ENCODE measurements at regions of chr2 and their contacts with region 1.

Region 1: GRCh38 chr2:27170581-27171333 is 22.0 kb downstream of the TCF23 start:
- DNase-seq: no peak
- ATAC-seq: no peak
- H3K4me3 Mint-ChIP-seq: no peak overlapping the region
- H3K27ac Mint-ChIP-seq: no peak overlapping the region
- H3K4me1 Mint-ChIP-seq: peaks cover 7% of the 10 kb centered on the region
- H3K27me3 Mint-ChIP-seq: peaks cover 14% of the 10 kb centered on the region

Region 2: GRCh38 chr2:27133905-27134780 is 36.6 kb before region 1 on chr2 and contains the start of gene PREB:
- CTCF ChIA-PET with region 1: interaction called, 14 read pairs
- POLR2A ChIA-PET with region 1: no interaction called
- DNase-seq: peak; percentile 98
- ATAC-seq: peak; percentile 96
- H3K4me3 Mint-ChIP-seq: peak within 1 kb of the TSS; percentile 94
- H3K27ac Mint-ChIP-seq: peak within 1 kb of the TSS; percentile 97
- H3K4me1 Mint-ChIP-seq: peaks cover 29% of the 10 kb centered on the region
- H3K27me3 Mint-ChIP-seq: no peaks in the 10 kb centered on the region
- total RNA-seq, gene PREB: 66.5 to 72.1 TPM

Region 3: GRCh38 chr2:27158346-27158867 is 12.3 kb before region 1 on chr2:
- CTCF ChIA-PET with region 1: interaction called, 13 read pairs
- POLR2A ChIA-PET with region 1: interaction called, 3 read pairs
- DNase-seq: no peak
- ATAC-seq: no peak
- H3K4me3 Mint-ChIP-seq: no peak overlapping the region
- H3K27ac Mint-ChIP-seq: no peak overlapping the region
- H3K4me1 Mint-ChIP-seq: no peaks in the 10 kb centered on the region
- H3K27me3 Mint-ChIP-seq: no peaks in the 10 kb centered on the region

Measured in activated CD8-positive, alpha-beta T cell treated with anti-CD3 and anti-CD28 coated beads, Interleukin-2, amount 10 ng/mL, durations not matched to agents 7 days and 5 days (primary cell).